Endothelial cell of umbilical vein (primary cell): ENCODE measurements at regions of chr7 and their contacts with region 1.

Region 1: DNA sequence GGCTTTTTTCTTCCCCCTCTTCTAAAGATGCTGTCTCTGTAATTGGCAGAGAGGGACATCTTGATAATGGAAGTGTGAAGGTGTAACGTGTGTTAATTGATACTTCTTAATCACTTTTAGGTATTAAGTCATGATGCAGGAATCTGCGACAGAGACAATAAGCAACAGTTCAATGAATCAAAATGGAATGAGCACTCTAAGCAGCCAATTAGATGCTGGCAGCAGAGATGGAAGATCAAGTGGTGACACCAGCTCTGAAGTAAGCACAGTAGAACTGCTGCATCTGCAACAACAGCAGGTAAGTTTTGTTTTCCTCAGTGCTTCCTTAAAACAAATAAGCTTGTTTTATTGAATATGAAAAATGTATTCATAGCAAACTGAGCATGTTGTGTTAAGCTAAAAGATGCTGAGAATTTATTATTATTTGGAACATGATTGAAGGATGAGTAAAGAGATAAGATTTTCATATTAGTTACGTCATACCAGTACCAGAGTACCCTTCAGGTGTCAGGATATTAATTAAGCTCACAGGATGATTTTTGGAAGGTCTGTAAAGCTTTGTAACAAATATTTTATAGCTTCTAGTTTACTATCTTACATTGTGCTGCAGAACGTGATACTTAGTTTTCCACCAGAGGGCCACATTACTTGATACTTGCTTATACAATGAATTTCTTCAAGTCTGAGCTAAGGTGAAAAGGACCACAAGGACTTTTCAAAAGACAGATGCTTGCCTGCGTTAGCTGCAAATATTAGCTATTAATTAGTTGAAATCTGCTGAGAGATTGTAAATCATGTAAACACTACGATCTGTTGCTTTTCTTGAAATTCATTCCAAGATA is 12.0 kb downstream of the FOXP2 start:
- DNase-seq: peak; percentile 49
- H3K4me3 ChIP-seq: no peak overlapping the region
- H3K27ac ChIP-seq: no peak overlapping the region
- H3K4me1 ChIP-seq: no peaks in the 10 kb centered on the region
- H3K27me3 ChIP-seq: no peaks in the 10 kb centered on the region
- CTCF ChIP-seq: peak in 1 of 2 donors; percentile 29
- POLR2A ChIP-seq: no peak

Region 2: GRCh38 chr7:114160925-114161324 is 265.7 kb before region 1 on chr7:
- CTCF ChIA-PET with region 1: no interaction called
- POLR2A ChIA-PET with region 1: no interaction called
- dilution Hi-C with region 1: no loop called
- intact Hi-C with region 1: no loop called
- DNase-seq: no peak
- H3K4me3 ChIP-seq: no peak overlapping the region
- H3K27ac ChIP-seq: no peak overlapping the region
- H3K4me1 ChIP-seq: no peaks in the 10 kb centered on the region
- H3K27me3 ChIP-seq: no peaks in the 10 kb centered on the region
- CTCF ChIP-seq: no peak
- POLR2A ChIP-seq: no peak

Region 3: GRCh38 chr7:114310345-114311110 is 116.1 kb before region 1 on chr7:
- CTCF ChIA-PET with region 1: interaction called, 18 read pairs
- POLR2A ChIA-PET with region 1: no interaction called
- dilution Hi-C with region 1: no loop called
- intact Hi-C with region 1: no loop called
- DNase-seq: no peak
- H3K4me3 ChIP-seq: no peak overlapping the region
- H3K27ac ChIP-seq: no peak overlapping the region
- H3K4me1 ChIP-seq: no peaks in the 10 kb centered on the region
- H3K27me3 ChIP-seq: no peaks in the 10 kb centered on the region
- CTCF ChIP-seq: no peak
- POLR2A ChIP-seq: no peak

Region 4: DNA sequence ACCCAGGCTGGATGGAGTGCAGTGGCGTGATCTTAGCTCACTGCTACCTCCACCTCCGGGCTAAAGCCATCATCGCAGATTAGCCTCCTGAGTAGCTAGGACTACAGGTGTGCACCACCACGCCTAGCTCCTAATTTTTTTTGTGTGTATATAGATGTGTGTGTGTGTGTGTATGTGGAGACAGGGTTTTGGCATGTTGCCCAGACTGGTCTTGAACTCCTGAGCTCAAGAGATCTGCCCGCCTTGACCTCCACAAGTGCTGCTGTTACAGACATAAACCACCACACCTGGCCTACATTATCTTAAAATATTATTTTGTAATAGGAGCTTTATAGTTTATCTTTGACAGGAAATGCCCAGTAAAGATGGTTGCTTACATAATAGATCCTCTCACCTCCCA is 13.0 kb after region 1 on chr7:
- CTCF ChIA-PET with region 1: interaction called, 28 read pairs
- POLR2A ChIA-PET with region 1: no interaction called
- dilution Hi-C with region 1: no loop called
- intact Hi-C with region 1: no loop called
- DNase-seq: no peak
- H3K4me3 ChIP-seq: no peak overlapping the region
- H3K27ac ChIP-seq: no peak overlapping the region
- H3K4me1 ChIP-seq: no peaks in the 10 kb centered on the region
- H3K27me3 ChIP-seq: no peaks in the 10 kb centered on the region
- CTCF ChIP-seq: no peak
- POLR2A ChIP-seq: no peak

Region 5: GRCh38 chr7:114502454-114503254 is 76.1 kb after region 1 on chr7:
- CTCF ChIA-PET with region 1: interaction called, 11 read pairs
- POLR2A ChIA-PET with region 1: no interaction called
- dilution Hi-C with region 1: no loop called
- intact Hi-C with region 1: no loop called
- DNase-seq: peak; percentile 84
- H3K4me3 ChIP-seq: peak overlapping the region in 1 of 3 experiments; percentile 32
- H3K27ac ChIP-seq: no peak overlapping the region
- H3K4me1 ChIP-seq: peaks cover 8% of the 10 kb centered on the region
- H3K27me3 ChIP-seq: no peaks in the 10 kb centered on the region
- CTCF ChIP-seq: no peak
- POLR2A ChIP-seq: no peak

Region 6: DNA sequence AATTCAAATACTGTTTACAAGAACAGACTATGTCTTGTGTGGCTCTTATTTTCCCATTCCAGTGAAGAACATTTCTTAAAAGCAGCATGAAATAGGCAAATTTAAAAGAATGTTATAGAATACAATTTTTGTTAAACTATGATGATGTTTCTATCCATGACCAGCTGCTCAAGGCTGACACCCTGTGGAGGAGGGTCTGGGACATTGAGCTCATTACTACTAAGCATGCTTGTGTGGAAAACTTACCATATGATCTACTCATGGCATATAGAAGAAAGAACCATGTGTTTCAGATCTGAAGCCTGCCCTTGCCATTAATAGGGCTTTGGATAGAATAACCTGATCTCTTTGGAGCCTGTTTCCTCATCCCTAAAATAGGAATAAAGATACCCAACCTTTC is 113.0 kb after region 1 on chr7:
- CTCF ChIA-PET with region 1: interaction called, 255 read pairs
- POLR2A ChIA-PET with region 1: no interaction called
- dilution Hi-C with region 1: no loop called
- intact Hi-C with region 1: loop called (anchors 1 kb)
- DNase-seq: peak; percentile 53
- H3K4me3 ChIP-seq: no peak overlapping the region
- H3K27ac ChIP-seq: no peak overlapping the region
- H3K4me1 ChIP-seq: no peaks in the 10 kb centered on the region
- H3K27me3 ChIP-seq: no peaks in the 10 kb centered on the region
- CTCF ChIP-seq: peak in 1 of 2 donors; percentile 43
- POLR2A ChIP-seq: no peak

Region 7: GRCh38 chr7:115910541-115911164 is 1484.0 kb after region 1 on chr7:
- CTCF ChIA-PET with region 1: interaction called, 7 read pairs
- POLR2A ChIA-PET with region 1: no interaction called
- dilution Hi-C with region 1: no loop called
- intact Hi-C with region 1: loop called (anchors 10 kb)
- DNase-seq: peak; percentile 64
- H3K4me3 ChIP-seq: no peak overlapping the region
- H3K27ac ChIP-seq: no peak overlapping the region
- H3K4me1 ChIP-seq: no peaks in the 10 kb centered on the region
- H3K27me3 ChIP-seq: no peaks in the 10 kb centered on the region
- CTCF ChIP-seq: peak in 1 of 2 donors; percentile 53
- POLR2A ChIP-seq: no peak